ENCODE measurements at regions of chr5 and their contacts with region 1.

Region 1: DNA sequence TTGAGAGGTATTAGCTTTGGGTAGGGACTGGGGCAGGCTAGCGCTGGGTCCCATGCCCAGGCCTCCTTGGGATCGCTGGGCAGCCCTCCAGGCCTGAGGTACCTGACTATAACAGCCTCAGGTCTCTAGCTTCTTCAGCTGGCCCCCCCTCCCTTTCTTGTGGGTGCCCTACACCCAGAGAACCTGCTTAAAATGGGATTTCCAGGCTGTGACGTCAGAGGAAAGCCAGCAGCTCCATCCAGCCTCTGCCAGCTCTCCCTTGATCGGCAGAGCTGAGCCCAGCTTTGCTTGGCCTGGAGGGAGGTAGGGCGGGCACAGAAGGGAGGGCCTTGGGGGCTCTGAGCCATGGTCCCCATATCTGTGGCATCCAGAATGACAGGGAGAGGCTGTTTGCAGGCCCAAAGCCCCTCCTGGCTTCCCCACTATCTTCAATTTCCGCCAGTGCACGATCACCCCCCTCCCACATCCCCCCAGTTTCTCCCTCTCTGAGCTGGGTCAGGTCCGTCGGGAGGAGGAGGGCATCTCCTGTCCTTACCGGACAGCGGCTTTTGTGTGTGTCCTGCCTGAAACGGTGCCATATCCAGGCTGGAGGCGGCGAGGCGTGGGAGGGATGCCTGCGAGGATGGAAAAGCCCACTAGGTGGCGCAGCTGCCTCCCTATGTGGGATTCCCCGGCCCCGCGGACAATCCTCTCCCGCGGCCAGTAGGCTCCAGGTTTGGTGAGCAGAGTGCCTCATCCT is 10.8 kb downstream of the REEP2 start:
- DNase-seq: peak; percentile 80 to 95 (median 88)
- H3K4me3 ChIP-seq: peak overlapping the region in 53 of 59 donors; percentile 3 to 55 (median 37)
- H3K27ac ChIP-seq: peak overlapping the region in 55 of 59 donors; percentile 12 to 93 (median 76)
- H3K27me3 ChIP-seq: no peaks in the 10 kb centered on the region
- CTCF ChIP-seq: peak; percentile 77 to 98 (median 93)

Region 2: GRCh38 chr5:138503487-138504270 is 54.0 kb after region 1 on chr5:
- intact Hi-C with region 1: loop called in 1 of 2 experiments (anchors 2 kb)
- DNase-seq: peak in 3 of 10 donors; percentile 35 to 57 (median 42)
- H3K4me3 ChIP-seq: peak overlapping the region in 1 of 59 donors; percentile 8
- H3K27ac ChIP-seq: peak overlapping the region in 50 of 59 donors; percentile 3 to 87 (median 61)
- H3K27me3 ChIP-seq: no peaks in the 10 kb centered on the region
- CTCF ChIP-seq: peak; percentile 51 to 87 (median 78)